ENCODE measurements at regions of chr6 and their contacts with region 1.

Region 1: DNA sequence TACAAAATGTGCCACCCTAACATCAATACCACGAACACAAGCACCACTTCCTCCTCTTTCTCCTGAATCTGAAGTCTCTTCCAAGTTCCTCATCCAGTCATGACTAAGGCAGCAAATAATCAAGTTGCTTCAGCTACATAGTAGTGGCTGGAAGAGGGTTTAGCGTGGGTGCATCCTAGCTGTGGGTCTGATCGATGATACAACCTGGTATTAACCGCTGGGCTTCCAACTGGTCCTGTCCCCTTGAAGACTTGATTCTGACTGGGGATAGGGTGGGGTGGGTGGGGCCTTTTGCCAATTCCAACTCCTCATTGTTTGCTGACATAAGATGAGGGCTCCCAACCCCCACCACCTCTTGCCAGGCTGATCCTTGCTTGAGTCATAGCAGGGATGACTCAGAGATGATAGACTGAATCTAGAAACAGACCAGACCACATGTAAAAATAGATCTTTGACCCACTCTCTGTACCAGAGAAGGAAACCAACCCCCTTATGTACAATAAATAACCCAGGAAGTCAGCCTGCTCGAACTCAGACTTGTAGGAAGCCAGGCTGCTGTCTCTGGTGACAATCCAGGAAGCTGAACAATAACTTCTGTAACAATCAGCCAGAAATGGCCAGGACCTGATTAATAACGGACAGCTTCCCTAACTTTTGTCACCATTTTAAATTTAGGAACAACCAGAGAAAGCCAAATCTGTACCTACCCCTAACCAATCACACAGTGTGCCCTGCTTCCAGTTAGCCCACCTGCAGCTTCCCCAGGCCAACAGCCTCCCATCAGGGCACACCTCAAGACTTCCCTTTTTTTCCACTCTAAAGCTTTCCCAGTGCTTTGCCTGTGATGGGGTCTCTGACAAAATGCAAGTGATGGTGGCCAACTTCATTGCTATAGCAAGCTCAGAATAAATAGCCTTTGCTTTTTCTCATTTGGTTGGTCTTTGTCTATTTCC is 68.9 kb upstream of the FAM184A start:
- DNase-seq: peak; percentile 96
- H3K4me3 Mint-ChIP-seq: no peak overlapping the region
- H3K27ac Mint-ChIP-seq: peak overlapping the region; percentile 0
- H3K4me1 Mint-ChIP-seq: peaks cover 19% of the 10 kb centered on the region
- H3K27me3 Mint-ChIP-seq: no peaks in the 10 kb centered on the region
- CTCF ChIP-seq: no peak

Region 2: DNA sequence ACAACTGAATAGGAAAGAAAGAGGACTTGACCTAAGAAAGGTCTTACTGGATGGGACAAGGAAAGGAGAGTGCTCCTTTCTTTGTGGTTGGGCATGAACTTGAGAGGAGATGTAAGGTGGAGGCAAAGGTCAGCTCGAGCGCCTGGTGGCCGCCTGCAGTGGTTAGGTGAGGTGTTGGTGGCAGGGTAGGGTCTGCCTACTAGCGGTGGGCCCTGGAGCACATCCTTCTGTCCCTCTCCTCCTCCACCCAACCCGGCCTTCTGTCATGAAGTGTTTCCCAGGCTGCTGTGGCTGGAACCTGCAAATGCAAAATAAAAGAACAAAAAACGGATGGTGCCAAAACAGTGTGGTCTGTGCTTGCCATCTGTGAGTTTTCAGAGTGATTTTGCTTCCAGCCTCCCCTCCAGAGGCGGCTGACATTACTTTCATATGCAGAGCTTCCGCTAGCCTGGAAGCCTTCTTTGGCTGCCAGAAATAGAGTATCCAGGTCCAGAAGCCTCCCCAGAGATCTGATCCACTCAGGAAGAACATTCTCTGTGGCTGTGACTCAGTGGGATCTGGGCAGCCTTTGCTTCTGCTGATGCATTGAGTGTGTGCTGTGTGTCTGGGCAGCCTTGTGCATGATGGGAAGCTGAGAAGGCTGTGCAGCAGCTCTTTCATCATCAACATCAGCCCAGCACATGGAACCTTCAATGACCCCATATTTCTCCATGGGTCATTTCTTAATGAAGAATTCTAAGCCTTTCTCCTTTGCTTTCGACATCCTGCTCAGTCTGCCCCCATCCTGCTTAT is 10.9 kb after region 1 on chr6:
- CTCF ChIA-PET with region 1: interaction called, 16 read pairs
- POLR2A ChIA-PET with region 1: no interaction called
- intact Hi-C with region 1: no loop called
- DNase-seq: no peak
- H3K4me3 Mint-ChIP-seq: no peak overlapping the region
- H3K27ac Mint-ChIP-seq: no peak overlapping the region
- H3K4me1 Mint-ChIP-seq: no peaks in the 10 kb centered on the region
- H3K27me3 Mint-ChIP-seq: no peaks in the 10 kb centered on the region
- CTCF ChIP-seq: no peak

Region 3: GRCh38 chr6:119349323-119350042 is 202.1 kb after region 1 on chr6 and contains the start of gene MAN1A1:
- CTCF ChIA-PET with region 1: interaction called, 33 read pairs
- POLR2A ChIA-PET with region 1: interaction called, 17 read pairs
- intact Hi-C with region 1: loop called (anchors 1 kb)
- DNase-seq: peak; percentile 78
- H3K4me3 Mint-ChIP-seq: peak within 1 kb of the TSS; percentile 71
- H3K27ac Mint-ChIP-seq: peak within 1 kb of the TSS; percentile 1
- H3K4me1 Mint-ChIP-seq: peaks cover 7% of the 10 kb centered on the region
- H3K27me3 Mint-ChIP-seq: no peaks in the 10 kb centered on the region
- CTCF ChIP-seq: no peak
- total RNA-seq, gene MAN1A1: 1.3 and 1.6 TPM in 2 replicates

Region 4: DNA sequence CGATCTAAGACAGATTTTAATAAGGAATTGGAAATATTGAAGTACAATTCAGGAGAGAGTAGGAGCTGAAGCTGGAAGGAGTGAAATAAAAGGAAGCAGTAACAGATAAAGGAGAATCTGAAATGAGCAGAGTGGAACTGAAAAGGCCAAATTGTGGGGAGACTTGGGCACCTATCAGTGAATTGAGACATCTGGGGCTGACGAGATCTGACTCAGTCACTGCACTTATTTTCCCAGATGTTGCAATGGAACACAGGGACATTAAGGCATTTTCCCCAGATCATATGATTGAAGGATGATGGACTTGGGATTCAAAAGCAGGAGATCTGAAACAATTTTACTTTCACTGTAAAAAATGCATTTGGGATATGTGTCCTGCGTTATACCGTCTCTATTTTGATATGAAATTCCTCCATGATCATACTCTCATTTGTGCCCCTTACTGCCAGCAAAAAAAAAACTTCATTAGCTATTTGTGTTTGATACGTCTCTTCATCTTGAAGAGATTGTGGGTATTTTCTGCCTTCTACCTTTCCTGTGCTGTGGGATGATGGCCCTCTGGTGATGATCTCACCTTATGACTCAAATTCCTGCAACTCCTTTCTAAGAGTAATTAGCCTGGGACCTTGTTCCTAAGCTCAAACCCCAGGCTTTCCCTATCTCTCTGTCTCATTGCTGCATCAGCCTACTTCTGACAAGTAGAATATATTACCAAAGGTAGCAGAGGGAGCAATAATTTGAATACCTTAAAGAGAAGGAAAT is 480.7 kb after region 1 on chr6:
- CTCF ChIA-PET with region 1: interaction called, 12 read pairs
- POLR2A ChIA-PET with region 1: no interaction called
- intact Hi-C with region 1: loop called (anchors 1 kb)
- DNase-seq: peak; percentile 45
- H3K4me3 Mint-ChIP-seq: peak overlapping the region; percentile 11
- H3K27ac Mint-ChIP-seq: no peak overlapping the region
- H3K4me1 Mint-ChIP-seq: peaks cover 13% of the 10 kb centered on the region
- H3K27me3 Mint-ChIP-seq: no peaks in the 10 kb centered on the region
- CTCF ChIP-seq: no peak

Region 5: GRCh38 chr6:119742188-119742803 is 594.9 kb after region 1 on chr6:
- CTCF ChIA-PET with region 1: interaction called, 5 read pairs
- POLR2A ChIA-PET with region 1: no interaction called
- intact Hi-C with region 1: loop called (anchors 2 kb)
- DNase-seq: peak; percentile 63
- H3K4me3 Mint-ChIP-seq: no peak overlapping the region
- H3K27ac Mint-ChIP-seq: no peak overlapping the region
- H3K4me1 Mint-ChIP-seq: no peaks in the 10 kb centered on the region
- H3K27me3 Mint-ChIP-seq: no peaks in the 10 kb centered on the region
- CTCF ChIP-seq: peak; percentile 80

Region 6: DNA sequence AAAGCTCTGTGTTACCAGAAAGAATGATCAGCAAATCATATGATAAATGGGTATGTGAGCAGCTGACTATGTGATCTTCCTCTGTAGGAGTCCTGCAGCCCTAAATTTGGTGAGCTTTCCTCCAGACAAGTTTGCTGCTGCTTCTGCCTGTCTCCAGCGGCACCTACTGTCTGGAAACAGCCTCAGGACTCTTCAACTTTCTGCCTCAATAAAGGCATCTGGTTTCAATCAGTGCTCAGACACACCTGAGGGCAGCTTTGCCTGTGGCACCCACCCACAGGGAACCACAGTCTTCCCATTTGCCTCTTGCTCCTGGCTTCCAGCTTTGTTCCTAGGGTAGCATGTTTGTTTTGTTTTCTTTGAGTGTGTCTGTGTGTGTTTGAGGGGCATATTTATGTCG is 930.1 kb after region 1 on chr6:
- CTCF ChIA-PET with region 1: interaction called, 26 read pairs
- POLR2A ChIA-PET with region 1: interaction called, 3 read pairs
- intact Hi-C with region 1: loop called (anchors 1 kb)
- DNase-seq: peak; percentile 55
- H3K4me3 Mint-ChIP-seq: no peak overlapping the region
- H3K27ac Mint-ChIP-seq: no peak overlapping the region
- H3K4me1 Mint-ChIP-seq: peaks cover 5% of the 10 kb centered on the region
- H3K27me3 Mint-ChIP-seq: no peaks in the 10 kb centered on the region
- CTCF ChIP-seq: peak; percentile 30

Region 7: GRCh38 chr6:120826253-120826652 is 1678.9 kb after region 1 on chr6:
- CTCF ChIA-PET with region 1: interaction called, 4 read pairs
- POLR2A ChIA-PET with region 1: no interaction called
- intact Hi-C with region 1: loop called (anchors 1 kb)
- DNase-seq: peak; percentile 61
- H3K4me3 Mint-ChIP-seq: no peak overlapping the region
- H3K27ac Mint-ChIP-seq: no peak overlapping the region
- H3K4me1 Mint-ChIP-seq: no peaks in the 10 kb centered on the region
- H3K27me3 Mint-ChIP-seq: no peaks in the 10 kb centered on the region
- CTCF ChIP-seq: peak; percentile 54